SK-N-SH (cell line): ENCODE measurements at regions of chr22 and their contacts with region 1.

Region 1: GRCh38 chr22:26812731-26813130 is 155.3 kb downstream of the MIAT start:
- DNase-seq: no peak
- H3K4me3 ChIP-seq: no peak overlapping the region
- H3K27ac ChIP-seq: no peak overlapping the region
- H3K4me1 ChIP-seq: peaks cover 3 to 20% of the 10 kb centered on the region in 2 experiments; a peak in 3 of 4 replicates
- H3K27me3 ChIP-seq: no peaks in the 10 kb centered on the region
- CTCF ChIP-seq: no peak
- EP300 ChIP-seq: no peak
- RAD21 ChIP-seq: no peak

Region 2: GRCh38 chr22:26722159-26722558 is 90.6 kb before region 1 on chr22:
- CTCF ChIA-PET with region 1: no interaction called
- POLR2A ChIA-PET with region 1: no interaction called
- DNase-seq: no peak
- H3K4me3 ChIP-seq: no peak overlapping the region
- H3K27ac ChIP-seq: no peak overlapping the region
- H3K4me1 ChIP-seq: peaks cover 0 to 3% of the 10 kb centered on the region in 2 experiments; a peak in 1 of 4 replicates
- H3K27me3 ChIP-seq: no peaks in the 10 kb centered on the region
- CTCF ChIP-seq: no peak
- EP300 ChIP-seq: no peak
- RAD21 ChIP-seq: no peak

Region 3: GRCh38 chr22:26828311-26828710 is 15.6 kb after region 1 on chr22:
- CTCF ChIA-PET with region 1: interaction called, 10 read pairs
- POLR2A ChIA-PET with region 1: no interaction called
- DNase-seq: no peak
- H3K4me3 ChIP-seq: no peak overlapping the region
- H3K27ac ChIP-seq: no peak overlapping the region
- H3K4me1 ChIP-seq: peaks cover 0 to 9% of the 10 kb centered on the region in 2 experiments; a peak in 2 of 4 replicates
- H3K27me3 ChIP-seq: no peaks in the 10 kb centered on the region
- CTCF ChIP-seq: no peak
- EP300 ChIP-seq: no peak
- RAD21 ChIP-seq: no peak